GM13976 (cell line): ENCODE measurements at regions of chr9 and their contacts with region 1.

Region 1: GRCh38 chr9:2857564-2858198 is 13.8 kb upstream of the PUM3 start:
- DNase-seq: peak; percentile 74
- CTCF ChIP-seq: peak; percentile 87

Region 2: DNA sequence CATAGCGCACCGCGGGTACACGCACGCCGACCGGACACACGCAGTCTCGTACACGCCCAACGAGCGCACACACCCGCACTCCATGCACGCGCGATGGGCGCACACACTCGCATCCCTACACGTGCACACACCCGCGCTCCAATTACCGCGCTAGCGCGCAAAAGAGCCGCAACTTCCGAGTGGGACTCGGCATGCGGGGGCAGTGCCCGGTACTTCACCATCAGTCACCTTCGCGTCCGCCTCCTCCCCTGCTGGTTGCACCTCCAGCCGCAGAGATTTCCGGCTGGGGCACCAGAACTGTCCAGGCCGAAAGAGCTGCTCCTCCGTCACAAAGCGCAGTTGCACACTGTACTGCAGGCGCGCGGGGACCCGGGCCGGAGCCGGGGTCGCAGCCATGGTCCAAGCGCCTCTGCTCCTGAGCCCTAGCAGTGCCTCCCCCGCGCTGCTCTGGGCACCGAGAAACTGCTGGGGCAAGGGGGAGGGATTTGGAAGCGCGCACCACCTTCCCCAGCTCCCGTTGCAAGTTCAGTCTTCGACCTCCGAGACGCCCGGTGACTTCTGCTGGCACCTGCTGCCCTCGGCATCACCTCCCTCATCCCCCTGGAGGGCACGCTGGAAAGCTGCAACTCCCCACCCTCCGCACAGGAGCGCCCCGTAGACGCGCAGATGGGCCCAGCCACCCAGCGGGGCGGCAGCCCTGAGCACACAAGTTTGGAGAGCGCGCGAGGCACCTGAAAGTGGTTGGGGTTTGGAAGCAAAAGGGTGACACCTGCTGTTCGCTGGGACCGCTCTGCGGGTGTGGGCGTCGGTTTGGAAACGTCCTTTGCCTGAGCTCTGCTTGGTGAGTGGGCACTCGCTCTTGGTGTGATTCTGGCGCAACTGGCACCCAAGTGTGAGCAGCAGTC is 323.6 kb after region 1 on chr9:
- in situ Hi-C with region 1: loop called (anchors 25 kb)
- DNase-seq: peak; percentile 59
- CTCF ChIP-seq: peak; percentile 33

Region 3: DNA sequence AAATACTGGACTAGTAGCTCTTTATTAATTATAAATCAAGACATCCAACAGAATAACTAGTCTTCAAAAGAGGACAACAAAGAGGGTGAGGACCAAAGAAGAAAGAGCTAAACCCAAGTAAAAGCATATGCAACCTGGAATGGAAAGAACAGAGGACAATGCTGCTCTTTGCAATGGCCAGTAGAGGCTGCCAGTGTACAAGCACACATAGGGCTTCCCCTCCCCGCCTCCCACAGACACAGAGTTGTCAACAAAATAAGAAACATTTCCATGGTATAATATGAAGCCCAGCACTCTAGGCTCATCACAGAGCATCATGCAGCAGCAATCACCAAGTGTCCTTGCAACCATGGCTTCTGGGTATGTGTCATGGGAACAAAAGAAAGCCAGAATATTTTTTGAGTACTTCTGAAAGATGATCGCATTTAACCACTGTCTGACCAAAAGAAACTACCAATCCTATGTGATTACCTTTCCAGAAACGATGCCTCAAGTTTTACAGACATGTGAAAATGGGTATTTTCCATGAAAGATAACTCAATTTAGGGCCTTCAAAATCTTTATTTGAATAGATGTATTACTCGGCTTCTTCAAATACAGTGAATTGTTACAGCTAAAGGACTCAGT is 610.0 kb after region 1 on chr9:
- in situ Hi-C with region 1: loop called (anchors 25 kb)
- DNase-seq: peak; percentile 51
- CTCF ChIP-seq: peak; percentile 98

Region 4: DNA sequence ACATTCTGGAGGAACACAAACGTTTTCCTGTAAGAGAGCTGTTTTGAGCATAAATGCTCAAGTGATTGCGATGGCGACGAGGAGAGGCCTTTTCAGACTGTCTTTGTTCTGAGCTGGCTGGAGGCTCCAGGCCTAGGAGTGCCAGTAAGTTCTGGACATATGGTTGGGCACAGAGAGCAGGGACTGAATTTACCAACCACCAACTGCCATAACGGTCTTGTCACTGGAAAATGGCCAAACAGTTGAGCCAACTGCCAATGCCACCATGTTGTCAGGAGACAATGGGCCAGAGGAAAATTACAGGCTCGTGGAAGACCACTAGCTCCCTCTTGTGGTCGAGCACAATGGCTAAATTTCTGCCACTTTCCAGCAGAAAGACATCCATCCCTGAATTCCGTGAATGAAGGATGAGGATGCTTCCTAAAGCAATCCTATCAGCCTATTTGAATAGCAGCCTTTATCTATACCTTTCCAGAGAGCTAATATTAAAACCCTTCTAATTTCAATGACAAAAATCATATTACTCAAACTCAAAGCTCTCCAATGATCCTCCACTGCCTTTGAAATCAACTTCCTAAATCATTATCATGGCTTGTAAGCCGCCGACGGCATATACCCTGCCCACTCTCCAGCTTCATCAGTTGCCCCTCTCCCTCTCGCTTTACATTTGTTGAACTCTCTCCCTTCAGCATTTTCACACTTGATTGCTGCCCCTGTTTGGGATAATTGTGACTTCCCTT is 1509.1 kb after region 1 on chr9:
- in situ Hi-C with region 1: loop called (anchors 25 kb)
- DNase-seq: peak; percentile 41
- CTCF ChIP-seq: peak; percentile 49